Brain microvascular endothelial cell (primary cell): ENCODE measurements at regions of chr6 and their contacts with region 1.

Region 1: DNA sequence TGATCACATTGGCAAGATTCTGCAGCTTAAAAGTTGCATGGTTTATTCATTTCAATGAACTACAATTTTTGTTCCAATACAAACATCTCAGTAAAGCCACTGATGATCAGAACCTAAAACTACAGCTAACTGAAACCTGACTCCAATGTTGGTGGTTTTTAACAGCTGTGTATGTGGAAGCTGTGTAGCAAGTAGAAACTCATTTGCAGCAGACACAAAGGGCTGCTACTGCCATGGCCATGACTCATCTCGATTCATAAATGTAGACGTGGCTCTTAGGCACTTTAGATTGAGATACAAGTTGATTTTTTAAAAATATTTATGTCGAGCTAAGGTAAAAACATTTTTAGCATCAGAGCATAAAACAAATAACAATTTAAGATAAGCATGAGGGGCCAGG is 19.5 kb upstream of the MAP3K4 start:
- DNase-seq: peak; percentile 93
- H3K4me3 ChIP-seq: no peak overlapping the region
- H3K27ac ChIP-seq: peak overlapping the region; percentile 65
- H3K27me3 ChIP-seq: no peaks in the 10 kb centered on the region
- CTCF ChIP-seq: no peak

Region 2: GRCh38 chr6:161370880-161371279 is 398.8 kb after region 1 on chr6:
- in situ Hi-C with region 1: loop called (anchors 25 kb)
- DNase-seq: peak; percentile 71
- H3K4me3 ChIP-seq: no peak overlapping the region
- H3K27ac ChIP-seq: no peak overlapping the region
- H3K27me3 ChIP-seq: no peaks in the 10 kb centered on the region
- CTCF ChIP-seq: peak; percentile 97